Dorsolateral prefrontal cortex (tissue), 120 donors: ENCODE measurements at regions of chr14 and their contacts with region 1.

Region 1: DNA sequence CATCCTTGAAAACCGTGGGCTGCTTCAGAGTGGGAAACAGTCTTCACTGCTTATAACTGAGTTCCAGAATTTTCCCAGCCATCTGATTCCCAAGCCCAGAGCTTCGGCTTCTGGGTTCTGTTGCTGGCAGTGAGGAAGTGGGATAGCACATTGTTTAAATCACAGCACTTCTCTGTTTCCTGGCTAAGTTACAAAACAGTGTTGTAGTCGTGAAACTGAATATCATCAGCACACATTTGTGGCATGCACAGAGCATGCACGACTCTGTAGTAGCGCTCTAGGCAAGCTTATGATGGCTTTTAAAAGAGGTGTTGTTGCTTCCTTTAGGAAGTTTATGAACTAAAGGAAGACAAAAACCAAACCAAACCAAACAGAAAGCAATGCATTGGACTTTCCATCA is 1005.5 kb downstream of the NRXN3 start:
- DNase-seq: peak in 3 of 10 donors; percentile 3 to 33 (median 28)
- H3K4me3 ChIP-seq: peak overlapping the region in 1 of 59 donors; percentile 24
- H3K27ac ChIP-seq: peak overlapping the region in 1 of 59 donors; percentile 7
- H3K27me3 ChIP-seq: no peaks in the 10 kb centered on the region
- CTCF ChIP-seq: no peak

Region 2: DNA sequence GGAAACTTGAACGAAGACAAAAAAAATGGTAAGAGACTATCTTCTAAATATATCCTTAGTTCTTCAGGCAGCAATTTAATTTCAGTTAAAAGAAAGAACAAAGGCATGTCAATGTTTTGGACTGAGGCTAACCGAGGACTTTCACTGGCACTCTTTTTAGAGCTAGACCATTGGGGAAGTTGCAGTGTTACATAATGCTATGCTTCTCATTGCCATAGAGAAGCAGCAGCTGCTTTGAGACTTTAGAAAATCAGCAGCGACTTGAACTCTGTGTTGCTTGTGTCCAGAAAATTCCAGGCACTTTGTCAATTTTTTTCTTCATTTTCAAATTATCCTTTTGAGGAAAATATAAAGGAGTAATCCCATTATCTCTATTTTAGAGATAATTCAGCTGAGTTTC is 41.3 kb before region 1 on chr14:
- intact Hi-C with region 1: no loop called
- DNase-seq: peak in 1 of 10 donors; percentile 17
- H3K4me3 ChIP-seq: no peak overlapping the region
- H3K27ac ChIP-seq: peak overlapping the region in 6 of 59 donors; percentile 9 to 42 (median 12)
- H3K27me3 ChIP-seq: no peaks in the 10 kb centered on the region
- CTCF ChIP-seq: no peak

Region 3: GRCh38 chr14:79150226-79150625 is 25.4 kb before region 1 on chr14:
- intact Hi-C with region 1: no loop called
- DNase-seq: no peak
- H3K4me3 ChIP-seq: no peak overlapping the region
- H3K27ac ChIP-seq: no peak overlapping the region
- H3K27me3 ChIP-seq: no peaks in the 10 kb centered on the region
- CTCF ChIP-seq: no peak

Region 4: GRCh38 chr14:79419571-79420327 is 244.1 kb after region 1 on chr14:
- intact Hi-C with region 1: no loop called
- DNase-seq: no peak
- H3K4me3 ChIP-seq: no peak overlapping the region
- H3K27ac ChIP-seq: peak overlapping the region in 1 of 59 donors; percentile 31
- H3K27me3 ChIP-seq: no peaks in the 10 kb centered on the region
- CTCF ChIP-seq: no peak

Region 5: DNA sequence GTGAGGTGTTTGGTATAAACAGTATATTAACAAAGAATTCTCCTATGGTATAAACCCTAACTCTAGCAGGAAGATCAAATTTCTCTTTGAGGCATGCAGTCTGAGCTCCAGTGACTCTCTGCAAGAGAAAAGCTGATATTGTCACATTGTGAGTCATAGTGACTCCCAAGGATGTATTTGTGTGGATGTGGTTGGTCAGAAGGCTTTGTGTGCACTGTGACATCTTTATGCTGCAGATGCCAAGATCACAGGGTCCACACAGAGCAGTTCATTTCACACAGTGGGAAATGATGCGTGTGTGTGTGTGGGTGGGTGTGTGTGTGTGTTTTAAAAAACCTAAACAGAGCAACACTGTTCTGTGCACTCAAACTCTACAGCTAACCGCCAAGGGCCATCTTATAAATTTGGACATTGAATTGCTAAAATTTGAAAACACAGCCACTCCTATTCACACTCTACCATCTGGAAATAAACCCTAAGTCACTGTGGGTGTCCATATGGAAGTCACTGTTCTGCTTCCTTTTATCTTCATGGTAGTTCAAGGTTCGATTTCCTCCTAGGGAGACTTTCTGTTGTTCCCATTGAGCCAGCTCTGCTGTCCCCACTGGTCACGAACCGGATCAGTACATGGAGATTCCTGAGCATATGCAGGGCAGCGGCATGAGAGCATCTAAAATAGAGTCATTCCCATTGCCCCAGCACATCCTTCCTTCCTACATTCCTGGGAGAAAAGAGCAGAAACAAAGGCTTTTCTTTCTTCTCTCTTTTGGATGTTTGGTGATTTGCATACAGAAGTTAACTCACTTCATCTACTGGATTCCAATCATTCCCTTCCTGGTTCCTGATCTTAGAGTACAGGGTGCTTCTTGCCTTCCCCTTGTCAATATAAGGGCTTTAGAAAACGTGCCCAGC is 308.1 kb after region 1 on chr14:
- intact Hi-C with region 1: loop called in 1 of 2 experiments (anchors 5 kb)
- DNase-seq: peak in 3 of 10 donors; percentile 16 to 43 (median 23)
- H3K4me3 ChIP-seq: no peak overlapping the region
- H3K27ac ChIP-seq: peak overlapping the region in 6 of 59 donors; percentile 6 to 48 (median 27)
- H3K27me3 ChIP-seq: no peaks in the 10 kb centered on the region
- CTCF ChIP-seq: no peak

Region 6: GRCh38 chr14:79552778-79553177 is 377.1 kb after region 1 on chr14:
- intact Hi-C with region 1: no loop called
- DNase-seq: no peak
- H3K4me3 ChIP-seq: no peak overlapping the region
- H3K27ac ChIP-seq: no peak overlapping the region
- H3K27me3 ChIP-seq: no peaks in the 10 kb centered on the region
- CTCF ChIP-seq: no peak